ENCODE measurements at regions of chr4 and their contacts with region 1.

Region 1: GRCh38 chr4:87481377-87481776 is 47.8 kb downstream of the SPARCL1 start:
- DNase-seq: no peak
- ATAC-seq: no peak
- H3K4me3 ChIP-seq: no peak overlapping the region
- H3K4me3 Mint-ChIP-seq: no peak overlapping the region
- H3K27ac ChIP-seq: no peak overlapping the region
- H3K27ac Mint-ChIP-seq: no peak overlapping the region
- H3K4me1 ChIP-seq: no peaks in the 10 kb centered on the region
- H3K4me1 Mint-ChIP-seq: no peaks in the 10 kb centered on the region
- H3K27me3 ChIP-seq: no peaks in the 10 kb centered on the region
- H3K27me3 Mint-ChIP-seq: no peaks in the 10 kb centered on the region
- CTCF ChIP-seq: no peak

Region 2: DNA sequence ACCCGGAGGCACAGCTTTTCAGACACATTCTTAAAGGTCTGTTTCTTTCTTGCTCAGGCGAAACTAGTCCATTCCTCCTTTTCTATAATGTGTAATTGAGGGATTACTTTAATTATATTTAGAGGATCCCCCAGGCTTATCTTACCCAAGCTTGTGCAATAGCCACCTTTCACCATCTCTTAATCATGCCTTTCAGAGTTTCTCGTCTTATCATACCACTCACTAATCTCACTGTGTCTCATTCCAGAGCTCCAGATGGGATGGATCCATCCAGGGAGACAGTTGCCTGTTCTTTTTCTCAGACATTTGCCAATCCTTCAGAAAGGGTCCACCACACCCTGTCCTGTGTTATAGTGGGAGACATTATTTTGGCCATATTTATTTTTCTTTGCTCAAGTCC is 35.3 kb after region 1 on chr4:
- CTCF ChIA-PET with region 1: no interaction called
- POLR2A ChIA-PET with region 1: no interaction called
- intact Hi-C with region 1: no loop called
- DNase-seq: no peak
- ATAC-seq: no peak
- H3K4me3 ChIP-seq: no peak overlapping the region
- H3K4me3 Mint-ChIP-seq: no peak overlapping the region
- H3K27ac ChIP-seq: no peak overlapping the region
- H3K27ac Mint-ChIP-seq: no peak overlapping the region
- H3K4me1 ChIP-seq: no peaks in the 10 kb centered on the region
- H3K4me1 Mint-ChIP-seq: no peaks in the 10 kb centered on the region
- H3K27me3 ChIP-seq: no peaks in the 10 kb centered on the region
- H3K27me3 Mint-ChIP-seq: no peaks in the 10 kb centered on the region
- CTCF ChIP-seq: no peak

Region 3: DNA sequence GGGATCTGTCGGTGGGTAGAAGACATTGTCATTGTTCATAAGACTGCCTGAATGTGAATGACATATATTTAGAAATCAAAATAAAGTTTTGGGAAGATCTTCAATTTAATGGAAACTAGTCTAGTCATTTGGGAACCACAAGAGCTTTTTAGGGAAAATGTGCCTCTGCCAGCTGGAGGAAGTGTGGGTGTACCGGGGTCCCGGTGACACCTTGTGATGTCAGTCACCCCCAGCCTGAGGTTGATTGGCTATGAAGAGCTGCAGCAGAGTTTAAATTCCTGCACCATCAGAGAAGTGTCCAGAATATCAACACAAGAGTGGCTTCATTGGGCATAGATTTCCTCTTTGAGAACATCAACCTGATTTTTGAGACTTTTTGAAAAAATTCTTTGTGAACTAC is 168.6 kb after region 1 on chr4 and contains the start of gene DMP1:
- CTCF ChIA-PET with region 1: no interaction called
- POLR2A ChIA-PET with region 1: no interaction called
- intact Hi-C with region 1: loop called in 1 of 2 experiments (anchors 5 kb)
- DNase-seq: no peak
- ATAC-seq: no peak
- H3K4me3 ChIP-seq: no peak within 1 kb of the TSS
- H3K4me3 Mint-ChIP-seq: no peak within 1 kb of the TSS
- H3K27ac ChIP-seq: no peak within 1 kb of the TSS
- H3K27ac Mint-ChIP-seq: no peak within 1 kb of the TSS
- H3K4me1 ChIP-seq: no peaks in the 10 kb centered on the region
- H3K4me1 Mint-ChIP-seq: no peaks in the 10 kb centered on the region
- H3K27me3 ChIP-seq: no peaks in the 10 kb centered on the region
- H3K27me3 Mint-ChIP-seq: peaks cover 2% of the 10 kb centered on the region
- CTCF ChIP-seq: no peak
- total RNA-seq, gene DMP1: not detected